Activated CD4-positive, alpha-beta T cell treated with anti-CD3 and anti-CD28 coated beads for 36 hours (primary cell): ENCODE measurements at regions of chr7 and their contacts with region 1.

Region 1: GRCh38 chr7:123692471-123692877 is 36.8 kb downstream of the LMOD2 start:
- DNase-seq: no peak
- ATAC-seq: no peak
- H3K4me3 Mint-ChIP-seq: no peak overlapping the region
- H3K27ac Mint-ChIP-seq: no peak overlapping the region
- H3K4me1 Mint-ChIP-seq: no peaks in the 10 kb centered on the region
- H3K27me3 Mint-ChIP-seq: no peaks in the 10 kb centered on the region

Region 2: GRCh38 chr7:123292227-123292626 is 400.2 kb before region 1 on chr7:
- CTCF ChIA-PET with region 1: no interaction called
- POLR2A ChIA-PET with region 1: no interaction called
- intact Hi-C with region 1: no loop called
- DNase-seq: no peak
- ATAC-seq: no peak
- H3K4me3 Mint-ChIP-seq: no peak overlapping the region
- H3K27ac Mint-ChIP-seq: no peak overlapping the region
- H3K4me1 Mint-ChIP-seq: no peaks in the 10 kb centered on the region
- H3K27me3 Mint-ChIP-seq: no peaks in the 10 kb centered on the region

Region 3: DNA sequence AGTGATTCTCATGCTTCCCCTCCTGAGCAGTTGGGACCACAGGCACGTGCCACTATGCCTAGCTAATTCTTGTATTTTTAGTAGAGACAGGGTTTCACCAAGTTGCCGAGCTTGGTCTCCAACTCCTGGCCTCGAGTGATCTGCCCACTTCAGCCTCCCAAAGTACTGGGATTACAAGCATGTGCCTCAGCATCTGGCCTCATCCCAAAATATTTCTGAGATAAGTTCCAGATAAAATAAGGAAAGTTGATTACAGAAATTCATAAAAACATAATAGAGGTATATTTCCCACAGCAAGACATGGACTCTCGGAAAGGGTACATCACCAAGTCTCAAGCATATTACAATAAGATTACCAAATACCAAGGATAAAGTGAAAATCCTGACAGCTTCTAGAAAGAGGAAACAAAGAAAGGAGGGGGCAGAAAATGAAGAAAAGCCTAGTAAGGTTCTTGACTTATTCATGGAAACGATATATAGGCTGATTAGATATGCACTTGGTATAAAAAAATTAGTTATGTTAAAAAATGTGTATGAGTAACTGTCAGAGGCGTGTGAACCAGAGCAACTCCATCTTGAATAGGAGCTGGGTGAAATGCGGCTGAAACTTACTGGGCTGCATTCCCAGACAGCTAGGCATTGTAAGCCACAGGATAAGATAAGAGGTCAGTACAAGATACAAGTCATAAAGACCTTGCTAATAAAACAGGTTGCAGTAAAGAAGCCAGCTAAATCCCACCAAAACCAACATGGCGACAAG is 193.1 kb before region 1 on chr7:
- CTCF ChIA-PET with region 1: no interaction called
- POLR2A ChIA-PET with region 1: no interaction called
- intact Hi-C with region 1: no loop called
- DNase-seq: no peak
- ATAC-seq: no peak
- H3K4me3 Mint-ChIP-seq: no peak overlapping the region
- H3K27ac Mint-ChIP-seq: no peak overlapping the region
- H3K4me1 Mint-ChIP-seq: no peaks in the 10 kb centered on the region
- H3K27me3 Mint-ChIP-seq: peaks cover 26% of the 10 kb centered on the region

Region 4: DNA sequence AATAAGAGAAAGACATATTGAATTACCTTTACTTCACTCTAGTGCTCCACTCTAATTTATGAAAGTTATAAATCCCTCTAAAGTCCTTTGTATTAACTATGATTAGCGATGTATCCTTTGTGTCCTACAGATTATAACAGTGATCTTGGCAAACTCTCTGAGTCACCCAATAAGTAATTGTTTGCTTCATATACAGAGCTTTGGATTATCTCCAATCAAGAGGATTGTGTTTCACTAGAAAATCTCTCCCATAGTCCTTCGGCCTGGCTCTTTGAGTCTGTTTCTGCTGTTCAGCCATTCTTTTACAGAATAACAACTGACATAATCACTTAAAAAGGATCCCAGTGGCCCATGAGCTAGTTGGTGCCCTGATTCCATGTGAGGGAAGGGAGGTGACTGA is 27.3 kb before region 1 on chr7:
- CTCF ChIA-PET with region 1: interaction called, 3 read pairs
- POLR2A ChIA-PET with region 1: no interaction called
- intact Hi-C with region 1: loop called in 1 of 2 experiments (anchors 2 kb)
- DNase-seq: no peak
- ATAC-seq: no peak
- H3K4me3 Mint-ChIP-seq: no peak overlapping the region
- H3K27ac Mint-ChIP-seq: no peak overlapping the region
- H3K4me1 Mint-ChIP-seq: no peaks in the 10 kb centered on the region
- H3K27me3 Mint-ChIP-seq: peaks cover 12% of the 10 kb centered on the region

Region 5: GRCh38 chr7:123705211-123705901 is 12.9 kb after region 1 on chr7:
- CTCF ChIA-PET with region 1: interaction called, 21 read pairs
- POLR2A ChIA-PET with region 1: no interaction called
- intact Hi-C with region 1: no loop called
- DNase-seq: no peak
- ATAC-seq: no peak
- H3K4me3 Mint-ChIP-seq: no peak overlapping the region
- H3K27ac Mint-ChIP-seq: no peak overlapping the region
- H3K4me1 Mint-ChIP-seq: peaks cover 2% of the 10 kb centered on the region
- H3K27me3 Mint-ChIP-seq: no peaks in the 10 kb centered on the region